IMR-90 (cell line): ENCODE measurements at regions of chr10 and their contacts with region 1.

Region 1: DNA sequence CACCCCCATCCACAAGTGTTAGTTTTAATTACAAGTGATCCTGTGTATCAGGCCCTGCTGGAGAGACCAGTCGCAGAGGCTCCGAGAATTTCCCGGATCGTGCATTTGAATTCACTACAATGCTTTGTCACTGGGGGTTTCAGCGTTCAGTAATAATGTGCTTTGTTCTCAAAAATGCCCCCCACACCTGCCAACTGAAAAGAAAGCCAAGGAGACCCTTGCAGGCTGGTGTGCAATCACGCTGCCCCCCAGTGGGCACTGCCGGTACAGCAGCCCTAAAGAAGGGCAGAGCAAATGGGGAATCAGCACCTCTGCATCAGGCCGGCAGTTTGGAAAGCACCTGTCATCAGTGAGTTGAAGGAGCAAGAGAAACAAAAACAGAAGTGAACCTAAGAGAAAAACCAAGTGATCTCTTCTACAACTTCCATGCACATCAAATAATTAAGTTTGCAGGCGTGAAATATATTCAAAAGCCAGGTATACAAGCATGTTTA is 177.6 kb downstream of the PARD3 start:
- DNase-seq: peak; percentile 23
- ATAC-seq: peak; percentile 79
- H3K4me3 ChIP-seq: no peak overlapping the region
- H3K27ac ChIP-seq: no peak overlapping the region
- H3K4me1 ChIP-seq: no peaks in the 10 kb centered on the region
- H3K27me3 ChIP-seq: no peaks in the 10 kb centered on the region
- CTCF ChIP-seq: peak; percentile 86
- POLR2A ChIP-seq: no peak
- RAD21 ChIP-seq: peak; percentile 87

Region 2: DNA sequence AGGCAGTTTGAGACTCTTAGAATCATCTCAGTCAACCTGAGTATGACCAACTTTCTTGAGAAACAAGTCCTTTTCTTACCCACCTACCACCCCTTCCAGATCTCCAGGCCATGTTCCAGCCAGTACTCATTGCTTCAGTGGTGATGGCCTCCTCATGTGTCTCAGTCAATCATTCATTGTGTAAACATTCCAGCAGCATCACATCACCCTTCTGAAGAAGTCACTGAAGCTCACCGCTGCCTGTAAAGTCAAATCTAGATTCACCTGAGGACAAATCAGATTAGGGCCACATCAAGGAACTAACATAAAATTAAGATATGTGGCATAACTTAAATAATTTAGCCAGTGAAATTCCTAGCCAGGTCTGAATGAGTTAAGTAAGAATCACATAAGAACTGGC is 835.7 kb before region 1 on chr10:
- CTCF ChIA-PET with region 1: no interaction called
- POLR2A ChIA-PET with region 1: no interaction called
- dilution Hi-C with region 1: no loop called
- in situ Hi-C with region 1: loop called (anchors 25 kb)
- intact Hi-C with region 1: no loop called
- DNase-seq: peak; percentile 25
- ATAC-seq: no peak
- H3K4me3 ChIP-seq: no peak overlapping the region
- H3K27ac ChIP-seq: no peak overlapping the region
- H3K4me1 ChIP-seq: no peaks in the 10 kb centered on the region
- H3K27me3 ChIP-seq: no peaks in the 10 kb centered on the region
- CTCF ChIP-seq: no peak
- POLR2A ChIP-seq: no peak
- RAD21 ChIP-seq: no peak

Region 3: GRCh38 chr10:34116220-34116641 is 521.2 kb before region 1 on chr10:
- CTCF ChIA-PET with region 1: no interaction called
- POLR2A ChIA-PET with region 1: no interaction called
- dilution Hi-C with region 1: no loop called
- in situ Hi-C with region 1: no loop called
- intact Hi-C with region 1: loop called (anchors 5 kb)
- DNase-seq: peak; percentile 27
- ATAC-seq: peak; percentile 85
- H3K4me3 ChIP-seq: no peak overlapping the region
- H3K27ac ChIP-seq: no peak overlapping the region
- H3K4me1 ChIP-seq: no peaks in the 10 kb centered on the region; the same call in 1 of the 2 replicates
- H3K27me3 ChIP-seq: no peaks in the 10 kb centered on the region
- CTCF ChIP-seq: no peak
- POLR2A ChIP-seq: no peak
- RAD21 ChIP-seq: no peak

Region 4: DNA sequence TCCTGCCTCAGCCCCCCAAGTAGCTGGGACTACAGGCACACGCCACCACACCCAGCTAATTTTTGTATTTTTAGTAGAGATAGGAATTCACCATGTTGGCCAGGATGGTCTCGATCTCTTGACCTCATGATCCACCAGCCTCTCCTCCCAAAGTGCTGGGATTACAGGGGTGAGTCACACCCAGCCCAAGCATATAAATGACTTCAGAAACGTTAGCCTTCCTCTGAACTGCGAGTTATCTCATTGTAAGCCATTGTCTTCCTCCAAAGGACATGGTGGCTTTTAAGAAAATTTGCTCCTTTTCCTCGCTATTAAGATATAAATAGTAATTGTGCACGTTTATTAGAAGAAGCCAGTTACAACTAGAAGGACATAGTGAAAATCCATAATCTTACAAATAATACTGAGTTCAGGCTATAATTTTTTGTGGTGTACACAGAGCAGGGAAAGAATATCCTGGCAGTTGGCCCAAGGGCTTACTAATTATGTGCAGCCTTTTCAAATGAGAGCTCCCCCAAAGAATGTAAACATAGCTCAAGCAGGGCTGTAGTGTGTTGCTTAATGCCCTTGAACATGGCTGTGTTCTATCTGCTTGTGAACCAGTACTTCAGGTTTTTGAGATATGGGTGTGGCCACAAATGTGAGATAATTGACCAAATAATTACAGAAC is 318.1 kb before region 1 on chr10:
- CTCF ChIA-PET with region 1: interaction called, 4 read pairs
- POLR2A ChIA-PET with region 1: no interaction called
- dilution Hi-C with region 1: no loop called
- in situ Hi-C with region 1: no loop called
- intact Hi-C with region 1: loop called (anchors 1 kb)
- DNase-seq: peak; percentile 97
- ATAC-seq: peak; percentile 94
- H3K4me3 ChIP-seq: no peak overlapping the region
- H3K27ac ChIP-seq: peak overlapping the region; percentile 80
- H3K4me1 ChIP-seq: peaks cover 10% of the 10 kb centered on the region; the same call in 1 of the 2 replicates
- H3K27me3 ChIP-seq: no peaks in the 10 kb centered on the region
- CTCF ChIP-seq: no peak
- POLR2A ChIP-seq: no peak
- RAD21 ChIP-seq: peak; percentile 26; the same call in 1 of the 2 replicates

Region 5: DNA sequence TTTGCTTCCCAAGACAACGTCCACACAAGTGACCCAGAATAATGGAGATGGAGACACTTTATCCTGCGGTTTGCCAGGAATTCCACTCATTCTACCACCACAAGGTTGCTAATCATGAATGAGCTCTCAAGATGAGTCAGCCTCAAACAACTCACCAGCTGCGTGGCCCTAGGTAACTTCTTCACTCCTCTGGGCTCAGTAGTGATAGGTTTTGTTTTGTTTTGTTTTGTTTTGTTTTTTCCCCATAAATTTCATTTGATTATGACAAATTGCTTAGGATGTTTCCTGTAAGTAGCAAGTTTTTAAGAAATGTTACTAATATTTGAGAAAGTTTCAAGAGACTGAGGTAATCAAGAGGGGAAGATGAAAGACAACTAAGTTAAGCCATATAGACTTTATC is 109.1 kb before region 1 on chr10:
- CTCF ChIA-PET with region 1: interaction called, 3 read pairs
- POLR2A ChIA-PET with region 1: no interaction called
- dilution Hi-C with region 1: no loop called
- in situ Hi-C with region 1: loop called (anchors 5 kb)
- intact Hi-C with region 1: loop called (anchors 1 kb)
- DNase-seq: peak; percentile 93
- ATAC-seq: peak; percentile 68
- H3K4me3 ChIP-seq: no peak overlapping the region
- H3K27ac ChIP-seq: no peak overlapping the region
- H3K4me1 ChIP-seq: peaks cover 14% of the 10 kb centered on the region
- H3K27me3 ChIP-seq: no peaks in the 10 kb centered on the region
- CTCF ChIP-seq: no peak
- POLR2A ChIP-seq: no peak
- RAD21 ChIP-seq: no peak